ENCODE measurements at regions of chr2 and their contacts with region 1.

Region 1: DNA sequence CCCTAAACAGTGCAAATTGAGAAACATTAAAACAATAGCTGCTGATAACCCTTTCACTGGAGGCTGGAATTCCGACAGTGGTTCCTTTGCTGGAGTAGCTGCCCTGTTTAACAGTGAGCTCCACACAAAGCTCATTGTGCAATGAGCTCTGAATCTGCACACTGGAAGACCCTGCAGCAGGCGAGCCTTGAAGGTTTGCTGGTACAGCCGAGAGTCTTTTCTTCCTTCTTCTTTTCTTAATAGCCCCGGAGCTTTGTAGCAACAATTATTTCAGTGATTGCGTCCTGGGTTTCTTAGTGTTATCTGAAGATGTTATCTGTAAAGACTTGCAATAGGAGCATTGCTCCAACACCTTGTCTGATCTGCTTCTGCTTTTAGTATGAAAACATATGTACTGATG is 50.8 kb upstream of the CXCR4 start:
- DNase-seq: no peak
- ATAC-seq: no peak

Region 2: DNA sequence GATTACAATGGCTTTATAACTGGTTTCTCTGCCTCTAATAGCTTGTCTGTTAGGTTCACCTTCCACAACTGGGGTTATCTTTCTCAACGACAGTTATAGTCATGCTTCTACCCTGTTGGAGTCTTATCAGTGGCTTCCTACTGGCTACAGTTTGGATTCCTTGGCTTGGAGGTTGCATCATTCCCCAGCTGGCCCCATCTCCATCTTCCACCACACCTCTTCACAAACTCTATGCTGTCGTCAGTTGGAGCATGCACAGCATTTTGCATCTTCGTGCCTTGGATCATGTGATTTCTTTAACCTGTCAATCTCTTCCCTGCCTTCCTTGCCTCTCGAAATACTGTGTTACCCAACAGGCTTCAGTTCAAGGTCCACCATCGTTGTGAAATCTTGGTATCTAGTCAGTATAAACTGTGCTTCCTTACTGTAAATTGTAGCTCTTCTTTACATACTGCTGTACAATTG is 265.6 kb after region 1 on chr2:
- intact Hi-C with region 1: no loop called
- DNase-seq: no peak
- ATAC-seq: no peak

Region 3: GRCh38 chr2:137535897-137536296 is 1367.2 kb after region 1 on chr2:
- intact Hi-C with region 1: loop called (anchors 5 kb)
- DNase-seq: no peak
- ATAC-seq: no peak